Posterior vena cava (tissue), 2 donors: ENCODE measurements at regions of chr16 and their contacts with region 1.

Region 1: GRCh38 chr16:84663433-84664101 is 15.3 kb downstream of the KLHL36 start:
- DNase-seq: peak; percentile 9

Region 2: GRCh38 chr16:84603140-84603816 is 60.3 kb before region 1 on chr16:
- intact Hi-C with region 1: no loop called
- DNase-seq: peak; percentile 98

Region 3: DNA sequence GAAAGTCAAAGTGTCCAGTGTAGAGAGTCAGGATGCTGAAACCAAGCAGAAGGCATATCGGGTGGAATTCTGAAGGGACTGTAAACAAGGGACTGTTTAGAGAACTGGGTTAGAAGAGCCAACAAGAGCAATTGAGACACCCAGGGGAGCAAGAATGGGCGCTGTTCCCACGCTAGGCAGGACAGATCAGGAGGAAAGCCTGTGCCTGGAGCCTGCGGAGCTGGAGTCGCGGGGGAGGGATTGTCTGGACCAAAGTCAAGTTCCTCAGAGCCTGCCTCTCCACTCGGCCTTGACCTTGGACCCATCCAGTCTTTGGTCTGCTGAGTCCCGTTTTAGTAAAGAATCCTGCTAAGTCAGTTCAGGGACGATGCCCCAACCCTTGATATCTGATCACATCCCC is 29.9 kb before region 1 on chr16:
- intact Hi-C with region 1: loop called in 1 of 2 experiments (anchors 1 kb)
- DNase-seq: peak; percentile 95

Region 4: DNA sequence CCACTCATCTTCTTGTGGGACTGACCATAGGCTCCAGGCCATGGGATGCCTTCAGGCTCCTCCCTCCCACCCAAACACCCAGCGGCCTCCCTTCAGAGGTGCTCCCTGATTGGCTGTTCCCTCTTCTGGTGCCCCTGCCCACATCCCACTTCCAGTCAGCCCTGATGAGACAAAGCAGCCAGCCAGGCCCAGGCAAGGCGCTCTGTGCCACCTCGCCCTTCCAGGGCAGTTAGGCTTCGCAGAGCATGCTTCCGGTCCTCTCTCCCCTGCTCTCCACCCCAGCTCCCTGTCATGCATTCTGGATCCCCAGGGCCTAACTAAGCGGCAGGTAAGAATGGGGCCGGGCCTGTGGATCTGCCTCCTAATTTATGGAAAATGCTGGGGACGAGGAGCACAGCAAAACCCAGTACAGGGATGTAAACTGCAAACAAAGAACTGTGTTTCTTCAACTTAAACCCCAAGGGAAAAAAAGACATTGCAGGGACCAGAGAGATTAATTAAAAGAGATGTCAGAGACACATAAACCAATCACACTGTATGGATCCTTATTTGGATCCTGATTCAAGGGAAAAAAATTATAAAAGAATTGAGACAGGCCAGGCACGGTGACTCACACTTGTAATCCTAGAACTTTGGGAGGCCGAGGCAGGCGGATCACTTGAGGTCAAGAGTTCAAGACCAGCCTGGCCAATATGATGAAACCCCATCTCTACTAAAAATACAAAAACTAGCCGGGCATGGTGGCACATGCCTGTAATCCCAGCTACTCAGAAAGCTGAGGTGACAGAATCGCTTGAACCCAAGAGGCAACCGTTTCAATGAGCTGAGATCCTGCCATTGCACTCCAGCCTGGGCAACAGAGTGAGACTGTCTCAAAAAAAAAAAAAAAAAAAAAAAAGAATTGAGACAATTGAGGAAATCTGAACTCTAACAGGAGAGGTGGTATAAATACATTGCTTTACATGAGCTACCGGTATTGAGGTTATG is 321.8 kb after region 1 on chr16:
- intact Hi-C with region 1: no loop called
- DNase-seq: no peak